AG04450 (cell line): ENCODE measurements at regions of chr17 and their contacts with region 1.

Region 1: DNA sequence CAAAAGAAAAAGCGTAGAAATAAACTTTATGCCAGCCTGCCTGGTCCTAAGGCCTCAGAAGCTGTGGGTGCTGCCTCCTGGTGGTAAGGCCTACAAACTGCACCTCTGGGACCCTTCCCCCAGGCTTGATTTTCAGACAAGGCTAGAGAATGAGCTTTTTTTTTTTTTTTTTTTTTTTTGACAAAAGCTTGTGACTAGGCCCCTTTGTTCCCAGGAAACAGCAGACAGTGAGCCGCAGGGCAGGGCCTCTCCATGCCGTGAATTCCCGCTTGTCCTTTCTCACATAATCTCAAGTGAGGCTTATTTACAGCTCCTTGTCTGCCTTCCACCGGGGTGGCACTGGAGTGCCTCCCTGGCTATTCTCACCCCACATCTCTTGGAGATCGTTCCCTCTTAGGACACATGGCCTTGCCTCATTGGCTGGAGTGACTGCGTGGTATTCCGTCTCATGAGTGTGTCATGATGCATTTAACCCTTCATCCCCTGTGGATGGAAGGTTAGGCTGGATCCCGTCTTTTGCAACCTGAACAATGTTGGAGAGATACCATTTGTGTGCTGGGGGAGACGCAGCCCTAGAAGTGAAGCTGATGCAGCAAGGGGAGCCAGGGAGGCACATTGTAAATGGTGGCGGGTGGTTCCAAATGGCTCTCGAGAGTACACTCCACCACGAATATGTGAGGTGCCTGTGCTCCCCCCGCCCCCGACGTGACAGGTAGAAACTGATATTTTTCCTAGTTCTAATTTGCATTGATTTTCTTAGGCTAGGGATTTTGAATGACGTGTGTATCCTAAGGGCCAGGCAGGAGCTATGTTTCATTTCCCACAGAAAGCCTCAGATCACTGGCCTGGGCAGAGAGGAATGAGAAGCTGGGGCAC is 49.6 kb downstream of the USP22 start:
- DNase-seq: peak; percentile 48
- H3K4me3 ChIP-seq: no peak overlapping the region
- H3K27ac ChIP-seq: no peak overlapping the region
- H3K27me3 ChIP-seq: peaks cover 4% of the 10 kb centered on the region
- CTCF ChIP-seq: peak; percentile 98

Region 2: GRCh38 chr17:20797292-20797691 is 195.9 kb before region 1 on chr17:
- CTCF ChIA-PET with region 1: interaction called, 69 read pairs
- POLR2A ChIA-PET with region 1: no interaction called
- DNase-seq: no peak
- H3K4me3 ChIP-seq: no peak overlapping the region
- H3K27ac ChIP-seq: no peak overlapping the region
- H3K27me3 ChIP-seq: no peaks in the 10 kb centered on the region
- CTCF ChIP-seq: no peak

Region 3: GRCh38 chr17:20935740-20936139 is 57.5 kb before region 1 on chr17:
- CTCF ChIA-PET with region 1: interaction called, 13 read pairs
- POLR2A ChIA-PET with region 1: no interaction called
- DNase-seq: no peak
- H3K4me3 ChIP-seq: no peak overlapping the region
- H3K27ac ChIP-seq: no peak overlapping the region
- H3K27me3 ChIP-seq: peaks cover 2% of the 10 kb centered on the region
- CTCF ChIP-seq: no peak

Region 4: DNA sequence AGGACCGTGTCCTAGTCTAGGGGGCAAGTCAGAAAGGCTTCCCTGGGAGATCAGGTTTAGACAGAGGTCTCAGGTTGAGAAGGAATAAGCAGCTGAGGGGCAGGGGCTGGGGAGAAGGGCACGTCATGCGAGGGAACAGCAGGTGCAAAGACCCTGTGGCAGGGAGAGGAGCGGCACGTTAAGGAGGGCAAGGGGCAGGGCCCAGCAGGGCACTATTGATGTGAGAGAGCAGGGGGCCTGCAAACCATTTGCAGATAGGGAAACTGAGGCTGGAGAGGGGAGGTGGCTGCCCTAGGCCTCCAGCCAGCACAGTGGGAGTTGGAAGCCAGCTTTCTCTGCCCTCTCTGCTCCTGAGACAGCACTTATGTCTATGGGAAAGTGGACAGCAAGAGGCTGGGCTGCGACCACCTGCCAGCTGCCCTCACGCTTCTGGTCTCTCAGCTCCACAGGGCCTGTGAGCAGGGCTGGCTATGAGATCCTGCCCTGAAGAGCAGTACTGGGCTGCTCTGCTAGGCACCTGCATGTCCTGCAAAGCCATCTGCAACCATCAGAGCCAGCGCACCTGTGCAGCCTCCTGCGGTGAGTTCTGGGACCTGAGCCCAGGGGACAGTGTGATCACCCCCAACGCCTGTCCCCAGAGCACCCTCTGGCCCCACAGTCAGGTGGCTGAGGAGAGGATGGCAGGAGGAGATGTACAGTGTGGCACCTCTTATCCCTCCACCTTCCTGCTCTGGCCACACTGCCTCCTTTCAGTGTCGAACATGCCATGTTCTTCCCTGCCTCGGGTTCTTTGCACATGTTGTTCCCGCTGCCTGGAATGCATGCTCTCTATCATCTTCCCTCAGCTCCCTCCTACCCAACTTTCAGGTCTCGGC is 11.9 kb before region 1 on chr17:
- CTCF ChIA-PET with region 1: interaction called, 13 read pairs
- POLR2A ChIA-PET with region 1: no interaction called
- DNase-seq: no peak
- H3K4me3 ChIP-seq: no peak overlapping the region
- H3K27ac ChIP-seq: no peak overlapping the region
- H3K27me3 ChIP-seq: peaks cover 5% of the 10 kb centered on the region
- CTCF ChIP-seq: no peak

Region 5: DNA sequence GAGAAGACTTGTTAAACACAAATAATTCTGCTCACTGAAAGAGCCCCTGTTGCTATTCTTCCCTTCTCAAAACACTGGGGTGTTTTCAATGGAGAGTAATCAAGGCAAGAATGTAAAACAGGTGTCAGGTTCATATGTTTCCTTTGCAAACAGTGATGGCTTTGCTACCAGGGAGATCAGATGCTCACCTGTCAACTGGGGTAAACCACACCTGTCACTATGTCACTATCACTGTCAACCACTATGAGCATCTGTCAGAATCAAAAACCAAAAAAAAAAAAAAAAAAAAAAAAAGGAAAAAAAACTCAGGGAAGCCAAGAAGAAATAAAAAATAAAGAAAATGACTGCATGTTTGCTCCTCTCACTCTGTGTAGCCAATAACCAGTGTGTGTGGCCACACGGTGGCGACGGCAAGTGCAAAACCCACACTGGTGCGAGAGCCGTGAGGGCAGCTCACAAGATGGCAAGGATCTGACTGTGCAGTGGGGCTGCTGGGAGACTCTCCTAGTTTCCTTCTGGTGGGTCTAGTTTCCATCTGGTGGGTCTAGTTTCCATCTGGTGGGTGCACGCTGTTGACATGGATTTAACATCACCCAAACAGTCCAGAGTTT is 26.9 kb after region 1 on chr17:
- CTCF ChIA-PET with region 1: interaction called, 12 read pairs
- POLR2A ChIA-PET with region 1: no interaction called
- DNase-seq: no peak
- H3K4me3 ChIP-seq: no peak overlapping the region
- H3K27ac ChIP-seq: no peak overlapping the region
- H3K27me3 ChIP-seq: no peaks in the 10 kb centered on the region
- CTCF ChIP-seq: peak; percentile 27; the same call in 1 of the 2 replicates